Left cardiac atrium (tissue), 4 donors: ENCODE measurements at regions of chr5 and their contacts with region 1.

Region 1: GRCh38 chr5:72600391-72600981 is 93.3 kb upstream of the ZNF366 start:
- DNase-seq: no peak
- ATAC-seq: peak in 1 of 2 donors; percentile 30

Region 2: GRCh38 chr5:72752909-72753308 is 152.4 kb after region 1 on chr5:
- intact Hi-C with region 1: no loop called
- DNase-seq: no peak
- ATAC-seq: no peak

Region 3: GRCh38 chr5:72847989-72848473 is 247.5 kb after region 1 on chr5:
- intact Hi-C with region 1: loop called in 1 of 2 experiments (anchors 10 kb)
- DNase-seq: peak; percentile 93
- ATAC-seq: peak; percentile 96